Right ventricle myocardium inferior (tissue), 1 donor: ENCODE measurements at regions of chr2 and their contacts with region 1.

Region 1: DNA sequence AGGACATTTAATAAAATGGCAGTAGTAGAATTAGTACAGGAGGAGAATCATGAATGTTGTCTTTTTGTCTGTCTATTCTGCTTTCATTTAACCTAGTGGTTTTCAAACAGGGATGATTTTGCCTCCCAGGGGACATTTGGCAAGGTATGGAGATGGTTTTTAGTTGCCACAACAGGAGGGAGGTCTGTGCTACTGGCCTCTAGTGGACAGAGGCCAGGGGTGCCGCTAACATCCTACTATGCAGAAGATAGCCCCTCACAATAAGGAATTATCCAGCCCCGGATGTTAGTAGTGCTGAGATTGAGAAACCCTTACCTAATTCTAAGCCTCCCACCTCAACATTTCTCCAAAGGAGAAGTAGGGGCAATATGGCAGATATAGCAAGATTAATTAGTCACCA is 18.3 kb downstream of the FASTKD2 start:
- DNase-seq: no peak
- ATAC-seq: no peak

Region 2: DNA sequence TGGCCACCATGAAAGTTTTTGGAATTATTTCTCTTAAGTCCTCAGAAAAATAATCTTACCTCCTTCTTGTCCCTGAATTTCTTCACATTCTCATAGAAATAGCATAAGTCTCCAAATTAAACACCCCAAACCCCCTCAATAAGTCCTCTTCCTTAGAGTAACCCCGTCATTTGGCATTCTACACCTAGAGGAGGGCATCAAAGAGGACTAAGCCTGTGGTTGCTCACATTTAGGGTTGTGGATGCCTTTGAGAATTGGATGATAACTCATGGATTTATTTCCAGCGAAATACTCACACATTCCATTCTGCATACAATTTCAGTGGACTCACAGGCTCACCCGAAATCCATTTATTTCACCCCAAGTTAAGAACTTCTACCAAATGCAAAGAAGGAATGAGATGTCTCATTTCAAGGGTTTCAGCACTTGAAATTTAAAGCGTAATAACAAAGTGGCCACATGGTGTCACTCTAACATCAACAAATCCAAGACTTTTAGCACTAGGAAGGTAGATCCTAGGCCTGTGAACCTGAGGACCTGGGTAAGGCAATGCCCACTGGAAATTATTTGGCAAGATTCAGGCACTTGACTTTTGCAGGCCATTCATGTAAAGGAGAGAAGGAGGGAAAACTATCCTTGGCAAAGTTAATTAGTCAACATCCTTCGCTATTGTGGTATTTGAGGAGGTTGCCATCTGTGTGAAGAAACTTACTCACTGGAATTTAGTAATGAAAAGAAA is 90.2 kb before region 1 on chr2:
- intact Hi-C with region 1: loop called (anchors 5 kb)
- DNase-seq: no peak
- ATAC-seq: no peak